ENCODE measurements at regions of chr19 and their contacts with region 1.

Region 1: GRCh38 chr19:40090241-40091204 is at the start of gene ZNF780A:
- DNase-seq: peak; percentile 51
- H3K4me3 ChIP-seq: peak within 1 kb of the TSS; percentile 66 to 86 (median 72)
- H3K27ac ChIP-seq: peak within 1 kb of the TSS; percentile 46
- H3K4me1 ChIP-seq: peaks cover 3% of the 10 kb centered on the region
- H3K27me3 ChIP-seq: no peaks in the 10 kb centered on the region
- CTCF ChIP-seq: no peak
- total RNA-seq, gene ZNF780A: 11.7 to 14.8 TPM

Region 2: DNA sequence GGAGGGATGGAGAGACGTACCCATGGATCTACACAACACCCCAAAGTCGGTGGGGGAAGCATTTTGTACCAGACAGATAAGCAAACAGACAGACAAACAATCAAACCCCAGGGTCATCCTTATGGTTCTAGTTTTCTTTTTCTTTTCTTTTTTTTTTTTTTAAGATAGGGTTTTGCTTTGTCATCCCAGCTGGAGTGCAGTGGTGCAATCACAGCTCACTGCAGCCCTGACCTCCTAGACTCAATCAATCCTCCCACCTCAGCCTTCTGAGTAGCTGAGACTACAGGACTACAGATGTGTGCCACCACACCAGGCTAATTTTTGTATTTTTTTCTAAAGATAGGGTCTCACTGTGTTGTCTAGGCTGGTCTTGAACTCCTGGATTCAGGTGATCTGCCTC is 226.4 kb before region 1 on chr19:
- CTCF ChIA-PET with region 1: no interaction called
- dilution Hi-C with region 1: loop called (anchors 10 kb)
- in situ Hi-C with region 1: no loop called
- intact Hi-C with region 1: no loop called
- DNase-seq: no peak
- H3K4me3 ChIP-seq: no peak overlapping the region
- H3K27ac ChIP-seq: no peak overlapping the region
- H3K4me1 ChIP-seq: no peaks in the 10 kb centered on the region
- H3K27me3 ChIP-seq: no peaks in the 10 kb centered on the region
- CTCF ChIP-seq: no peak